ENCODE measurements at regions of chr2 and their contacts with region 1.

Region 1: DNA sequence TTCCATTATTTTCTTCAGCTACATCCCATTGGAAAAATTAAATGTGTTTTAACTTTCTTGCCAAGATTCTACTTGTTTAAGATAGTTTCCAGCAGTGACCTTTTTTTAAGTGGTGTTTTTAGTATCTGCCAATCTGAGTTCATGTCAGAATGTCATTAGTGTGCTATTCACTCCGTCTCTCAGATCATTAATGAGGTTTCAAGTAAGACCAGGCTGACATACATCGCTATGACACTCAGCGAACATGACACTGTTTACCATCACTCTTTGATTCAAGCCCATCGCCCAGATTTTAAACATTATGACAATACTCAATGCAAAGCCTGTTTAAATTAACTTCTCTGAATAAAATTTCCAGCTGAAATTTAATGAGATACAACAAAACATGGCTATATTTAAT is 272.0 kb upstream of the KYNU start:
- DNase-seq: no peak
- CTCF ChIP-seq: no peak

Region 2: GRCh38 chr2:142585785-142586184 is 19.6 kb before region 1 on chr2:
- CTCF ChIA-PET with region 1: no interaction called
- POLR2A ChIA-PET with region 1: no interaction called
- DNase-seq: peak; percentile 8
- CTCF ChIP-seq: no peak

Region 3: DNA sequence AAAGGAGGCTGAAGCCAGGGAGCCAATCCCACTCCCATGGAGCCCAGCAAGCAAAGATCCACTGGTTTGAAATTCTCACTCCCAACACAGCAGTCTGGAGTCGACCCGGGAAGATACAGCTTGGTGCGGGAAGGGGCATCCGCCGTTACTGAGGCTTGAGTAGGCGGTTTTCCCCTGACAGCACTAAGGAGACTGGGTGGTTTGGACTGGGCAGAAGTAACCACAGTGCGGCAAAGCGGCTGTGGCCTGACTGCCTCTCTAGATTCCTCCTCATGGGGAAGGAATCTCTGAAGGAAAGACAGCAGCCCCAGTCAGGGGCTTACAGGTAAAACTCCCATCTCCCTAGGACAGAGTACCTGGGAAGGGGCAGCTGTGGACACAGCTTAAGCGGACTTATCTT is 10.5 kb after region 1 on chr2:
- CTCF ChIA-PET with region 1: interaction called, 11 read pairs
- POLR2A ChIA-PET with region 1: no interaction called
- DNase-seq: no peak
- CTCF ChIP-seq: no peak